Common myeloid progenitor, CD34-positive (primary cell): ENCODE measurements at regions of chr14 and their contacts with region 1.

Region 1: DNA sequence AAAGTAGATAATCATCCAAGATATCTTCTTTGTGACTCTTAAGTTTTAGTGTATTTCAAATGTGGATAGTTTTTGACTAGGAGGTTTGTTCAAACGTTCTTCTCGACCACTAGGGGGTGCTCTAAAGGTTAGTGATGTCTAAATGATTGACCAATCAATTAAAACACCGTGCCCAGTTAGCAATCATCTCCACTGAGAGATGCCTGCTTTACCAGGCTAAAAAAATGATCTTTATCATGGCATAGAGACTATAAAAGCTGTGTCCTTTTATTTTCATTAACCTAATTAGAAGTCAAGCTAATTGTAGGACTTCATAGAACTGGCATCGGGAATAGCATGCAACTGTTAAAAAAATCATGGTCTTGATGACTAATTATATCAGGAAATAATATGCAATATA is 153.9 kb downstream of the PRKCH start:
- DNase-seq: peak; percentile 70 to 78 (median 76)
- H3K4me3 ChIP-seq: peak overlapping the region in 1 of 7 experiments; percentile 16
- H3K27ac ChIP-seq: peak overlapping the region in 1 of 2 experiments; percentile 93
- H3K4me1 ChIP-seq: peaks cover 61 to 98% (median 85%) of the 10 kb centered on the region in 4 experiments
- H3K27me3 ChIP-seq: no peaks in the 10 kb centered on the region

Region 2: DNA sequence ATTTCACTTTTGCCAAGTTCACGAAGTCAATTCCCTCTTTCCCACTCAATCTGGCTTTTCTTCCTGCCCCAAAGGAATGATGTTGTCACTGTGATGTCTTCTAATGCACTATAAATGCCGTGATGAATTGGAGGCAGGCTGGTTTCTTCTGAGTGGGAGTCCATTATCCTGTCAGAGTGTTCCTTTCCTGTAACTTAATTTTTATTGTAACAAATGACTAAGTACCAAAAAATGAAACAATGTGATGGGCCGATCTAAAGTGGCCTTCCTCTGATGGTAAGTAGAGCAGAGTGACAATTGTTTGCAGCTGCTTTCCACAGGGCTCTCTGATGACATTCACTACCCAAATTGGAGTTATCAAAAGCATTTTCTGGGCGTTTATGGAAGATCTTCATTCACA is 216.3 kb before region 1 on chr14:
- CTCF ChIA-PET with region 1: no interaction called
- POLR2A ChIA-PET with region 1: no interaction called
- DNase-seq: no peak
- H3K4me3 ChIP-seq: no peak overlapping the region
- H3K27ac ChIP-seq: no peak overlapping the region
- H3K4me1 ChIP-seq: peaks cover 0 to 4% (median under 1%) of the 10 kb centered on the region in 4 experiments
- H3K27me3 ChIP-seq: peaks cover 0 to 3% (median 2%) of the 10 kb centered on the region in 5 experiments

Region 3: DNA sequence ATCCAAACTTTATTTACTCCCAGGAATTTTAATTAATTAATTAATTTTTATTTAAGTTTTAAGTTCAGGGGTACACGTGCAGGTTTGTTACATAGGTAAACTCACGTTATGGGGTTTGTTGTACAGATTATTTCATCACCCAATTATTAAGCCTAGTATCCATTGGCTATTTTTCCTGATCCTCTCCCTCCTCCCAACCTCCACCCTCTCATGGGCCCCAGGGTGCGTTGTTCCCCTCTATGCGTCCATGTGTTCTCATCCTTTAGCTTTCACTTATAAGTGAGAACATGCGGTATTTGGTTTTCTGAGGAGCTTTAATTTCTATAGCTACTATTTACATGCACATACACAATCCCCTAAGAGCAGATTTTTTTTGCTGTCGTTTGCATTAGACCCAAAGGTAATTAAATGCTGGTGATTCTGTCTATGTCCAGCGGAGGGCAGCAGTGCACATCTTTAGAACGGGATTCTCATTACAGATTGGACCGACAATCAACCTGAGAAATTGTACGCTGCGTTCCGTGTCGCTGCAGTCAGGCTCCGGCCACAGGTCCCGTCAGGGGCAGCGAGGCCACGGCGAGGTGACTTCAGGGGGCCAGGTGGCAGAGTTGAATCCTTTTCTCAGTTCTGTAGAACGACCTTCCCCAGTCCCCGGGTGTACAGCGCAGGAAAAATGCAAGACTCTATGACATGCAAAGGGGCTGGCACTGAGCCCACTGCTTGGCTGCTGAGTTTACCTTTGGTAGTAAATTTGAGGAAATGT is 205.8 kb before region 1 on chr14:
- CTCF ChIA-PET with region 1: no interaction called
- POLR2A ChIA-PET with region 1: no interaction called
- DNase-seq: peak; percentile 77 to 91 (median 87)
- H3K4me3 ChIP-seq: peak overlapping the region in 6 of 7 experiments; percentile 47 to 75 (median 59)
- H3K27ac ChIP-seq: no peak overlapping the region
- H3K4me1 ChIP-seq: peaks cover 0 to 5% (median 4%) of the 10 kb centered on the region in 4 experiments
- H3K27me3 ChIP-seq: peaks cover 8 to 38% (median 20%) of the 10 kb centered on the region in 5 experiments

Region 4: DNA sequence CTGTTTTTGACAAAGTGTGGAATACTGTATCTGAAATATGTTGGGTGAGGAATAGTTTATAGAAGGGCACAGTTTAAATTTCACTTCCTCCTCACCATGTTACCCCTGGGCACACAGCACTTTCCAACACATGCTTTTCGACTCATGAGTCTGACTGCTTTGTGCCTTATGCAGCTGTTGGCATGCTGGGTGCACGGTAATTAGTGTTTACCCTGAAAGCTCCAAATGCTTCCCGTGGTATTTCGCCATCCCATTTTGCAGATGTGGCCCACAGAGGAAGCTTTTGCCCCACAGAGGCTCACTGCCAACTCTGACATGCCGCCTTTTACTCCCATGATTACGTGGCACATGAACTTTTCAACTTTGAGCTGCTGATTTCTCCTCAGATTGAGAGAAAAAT is 14.6 kb after region 1 on chr14:
- CTCF ChIA-PET with region 1: interaction called, 24 read pairs
- POLR2A ChIA-PET with region 1: interaction called, 3 read pairs
- DNase-seq: no peak
- H3K4me3 ChIP-seq: no peak overlapping the region
- H3K27ac ChIP-seq: no peak overlapping the region
- H3K4me1 ChIP-seq: peaks cover 3 to 11% (median 6%) of the 10 kb centered on the region in 4 experiments
- H3K27me3 ChIP-seq: no peaks in the 10 kb centered on the region

Region 5: DNA sequence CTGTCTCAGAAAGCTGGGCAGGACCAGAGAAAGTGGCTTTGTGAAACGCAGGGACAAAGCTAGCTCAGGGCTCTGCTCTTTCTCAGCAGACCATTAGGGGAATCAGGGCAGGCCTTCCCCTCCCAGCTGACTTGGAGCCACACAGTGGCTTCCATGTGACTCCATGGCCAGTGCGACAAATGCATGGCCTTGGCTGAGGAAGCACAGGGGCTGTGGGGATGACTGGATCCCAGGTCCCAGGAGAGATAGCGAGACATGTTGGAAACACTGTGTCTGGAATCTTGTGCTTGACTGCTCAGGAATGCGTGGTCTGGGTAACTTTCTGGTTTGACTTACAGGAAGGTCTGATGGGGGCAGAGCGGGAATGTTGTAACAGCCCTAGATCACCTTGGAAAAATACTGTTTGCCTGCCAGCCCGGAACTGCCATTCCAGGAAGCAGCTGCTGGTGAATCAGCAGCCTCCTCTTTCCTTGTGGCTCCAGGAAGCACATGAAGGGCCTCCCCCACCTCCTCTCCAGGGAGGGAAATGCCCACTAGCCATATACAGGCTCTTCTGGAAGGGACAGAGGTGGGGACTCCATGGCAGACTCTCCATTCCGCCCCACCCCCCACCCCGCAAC is 86.5 kb after region 1 on chr14:
- CTCF ChIA-PET with region 1: interaction called, 12 read pairs
- POLR2A ChIA-PET with region 1: no interaction called
- DNase-seq: peak in 2 of 3 donors; percentile 10 to 31
- H3K4me3 ChIP-seq: no peak overlapping the region
- H3K27ac ChIP-seq: no peak overlapping the region
- H3K4me1 ChIP-seq: peaks cover 0 to 26% (median 19%) of the 10 kb centered on the region in 4 experiments
- H3K27me3 ChIP-seq: no peaks in the 10 kb centered on the region

Region 6: DNA sequence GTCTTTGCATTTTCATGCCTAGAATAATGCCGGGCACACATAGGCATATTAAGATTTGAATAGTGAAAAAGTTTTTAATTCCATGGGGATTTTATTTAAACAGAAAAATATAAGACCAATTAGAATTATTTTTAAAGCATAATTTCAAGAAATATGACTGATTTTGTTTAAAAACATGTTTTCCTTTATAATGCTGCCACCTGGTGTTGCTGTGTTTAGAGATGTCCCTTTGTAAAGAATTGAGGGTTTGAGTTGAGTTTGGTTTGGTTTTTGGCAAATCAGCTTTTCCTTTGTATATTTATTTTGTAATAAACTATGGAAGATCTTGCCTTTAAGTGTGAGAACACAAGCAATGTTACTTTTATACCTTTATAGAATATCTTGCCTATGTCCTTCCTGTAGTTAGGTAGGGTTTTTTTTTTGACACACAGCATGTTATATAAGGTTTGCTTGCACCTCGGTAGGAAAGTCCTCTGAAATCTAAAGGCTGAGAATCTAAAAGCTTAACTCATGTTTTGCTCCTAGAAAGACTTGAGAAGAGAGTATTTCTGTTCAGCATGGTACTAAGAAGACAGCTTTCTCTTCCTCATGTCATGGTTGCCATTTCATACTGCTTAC is 255.5 kb after region 1 on chr14:
- CTCF ChIA-PET with region 1: interaction called, 28 read pairs
- POLR2A ChIA-PET with region 1: interaction called, 7 read pairs
- DNase-seq: peak; percentile 37 to 69 (median 58)
- H3K4me3 ChIP-seq: no peak overlapping the region
- H3K27ac ChIP-seq: no peak overlapping the region
- H3K4me1 ChIP-seq: no peaks in the 10 kb centered on the region
- H3K27me3 ChIP-seq: no peaks in the 10 kb centered on the region

Region 7: DNA sequence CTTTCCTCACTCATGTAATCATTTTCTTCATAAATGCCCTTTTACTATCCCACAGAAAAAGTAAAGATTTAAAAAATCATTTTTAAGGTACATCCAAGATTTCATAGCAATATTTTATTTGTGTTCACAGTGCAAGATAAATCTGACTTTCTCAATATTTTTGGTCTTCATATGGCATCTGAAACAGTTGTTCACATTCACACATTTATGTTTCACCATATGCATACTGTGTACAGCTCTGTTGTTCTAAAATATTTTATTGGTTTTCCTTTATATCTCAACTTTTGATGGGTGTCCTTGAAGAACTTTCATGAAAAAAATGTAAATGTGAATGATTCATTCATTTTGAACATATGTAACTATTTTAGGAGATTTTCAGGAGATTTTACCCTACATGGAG is 635.6 kb after region 1 on chr14:
- CTCF ChIA-PET with region 1: no interaction called
- POLR2A ChIA-PET with region 1: no interaction called
- DNase-seq: no peak
- H3K4me3 ChIP-seq: no peak overlapping the region
- H3K27ac ChIP-seq: no peak overlapping the region
- H3K4me1 ChIP-seq: no peaks in the 10 kb centered on the region
- H3K27me3 ChIP-seq: peaks cover 0 to 28% (median 16%) of the 10 kb centered on the region in 5 experiments